ENCODE measurements at regions of chr1 and their contacts with region 1.

Region 1: DNA sequence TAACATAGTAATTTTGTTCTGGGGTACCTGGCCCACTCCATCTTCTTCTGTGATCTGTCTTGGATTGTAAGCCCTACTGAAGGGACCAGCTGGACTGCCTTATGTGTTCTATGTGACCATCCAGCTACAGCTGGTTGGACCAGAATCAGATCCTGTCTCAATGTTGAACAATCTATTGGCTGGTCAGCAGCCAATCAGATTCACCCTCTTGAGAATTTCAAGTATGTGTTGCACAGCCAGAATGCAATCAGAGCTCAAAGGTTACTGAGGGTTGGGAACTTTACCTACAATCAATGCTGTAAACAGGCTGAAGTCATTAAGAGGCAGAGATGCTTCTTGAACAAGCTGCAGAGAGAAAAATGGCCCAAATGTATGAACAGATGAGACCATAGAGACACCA is 61.9 kb downstream of the KCNC4 start:
- DNase-seq: no peak
- H3K4me3 ChIP-seq: no peak overlapping the region
- CTCF ChIP-seq: no peak

Region 2: DNA sequence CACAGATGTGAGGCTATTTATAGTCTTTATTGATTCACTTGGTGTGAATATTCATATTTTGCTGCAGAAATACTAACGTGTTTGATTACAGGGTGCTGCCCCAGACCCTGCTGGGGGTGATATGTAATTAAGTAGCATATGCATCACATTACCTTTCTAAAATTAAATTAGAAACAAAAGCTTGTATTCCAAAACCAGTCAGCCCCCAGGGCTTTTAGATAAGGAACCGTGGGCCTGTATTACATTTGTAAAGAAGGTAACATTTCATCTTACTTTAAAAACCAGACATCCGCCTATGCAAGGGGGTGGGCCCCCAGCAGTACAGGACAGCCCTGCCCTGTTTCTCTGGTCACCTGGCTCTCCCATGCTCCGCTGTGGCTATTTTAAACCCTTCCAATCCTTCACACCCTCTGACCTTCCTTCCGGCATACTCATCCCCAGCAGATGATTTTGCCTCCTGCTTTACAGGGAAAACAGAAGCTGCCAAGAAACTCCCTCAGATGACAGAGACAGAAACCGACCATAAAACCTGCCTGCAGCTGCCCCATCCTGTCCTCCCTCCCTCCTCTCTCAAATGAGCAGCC is 83.9 kb before region 1 on chr1:
- in situ Hi-C with region 1: no loop called
- DNase-seq: no peak
- H3K4me3 ChIP-seq: no peak overlapping the region
- CTCF ChIP-seq: no peak

Region 3: DNA sequence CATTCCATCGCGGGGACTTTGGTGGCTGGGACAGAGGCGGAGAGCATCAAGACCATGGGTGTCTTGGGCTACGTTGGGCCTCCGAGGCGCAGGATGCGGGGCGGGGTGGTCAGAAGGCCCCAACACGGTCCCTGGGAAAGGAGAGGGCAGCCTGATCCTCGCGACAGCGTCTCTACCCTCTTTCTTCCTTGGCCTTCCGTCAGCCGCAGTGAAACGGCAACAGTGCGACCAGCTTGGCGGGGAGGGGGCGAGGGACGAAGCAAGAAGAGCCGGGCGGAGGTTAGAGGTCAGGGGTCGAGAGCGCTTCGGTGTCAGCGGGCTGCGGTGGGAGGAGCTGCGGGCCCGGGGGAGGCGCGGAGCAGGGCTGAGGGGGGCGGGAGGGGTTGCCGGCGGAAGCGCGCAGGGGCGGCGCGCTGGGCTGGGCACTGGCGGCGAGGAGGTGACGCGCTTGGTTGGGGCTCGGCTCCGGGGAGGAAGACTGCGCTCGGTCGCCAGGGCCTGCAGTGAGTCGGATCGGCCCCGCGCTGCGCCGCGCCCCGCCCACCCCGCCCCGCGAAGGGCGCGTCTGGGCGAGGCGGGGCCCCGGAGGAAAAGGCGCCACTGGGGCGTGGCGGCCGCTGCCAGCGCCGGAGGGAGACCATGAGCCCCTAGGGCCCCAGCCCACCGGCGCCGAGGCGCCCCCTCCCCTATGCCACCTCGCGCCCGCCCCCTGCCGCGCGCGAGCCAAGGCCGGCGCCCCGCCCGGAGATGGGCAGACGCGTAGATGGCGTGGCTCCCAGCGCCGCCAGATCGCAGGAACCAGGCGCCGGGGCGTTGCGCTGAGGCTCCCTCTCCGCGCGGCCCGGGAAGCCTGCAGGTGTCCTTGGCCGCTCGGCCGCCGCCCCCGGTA is 62.1 kb before region 1 on chr1 and contains the start of gene KCNC4:
- in situ Hi-C with region 1: loop called (anchors 5 kb)
- DNase-seq: no peak
- H3K4me3 ChIP-seq: peak within 1 kb of the TSS; percentile 43
- CTCF ChIP-seq: no peak

Region 4: DNA sequence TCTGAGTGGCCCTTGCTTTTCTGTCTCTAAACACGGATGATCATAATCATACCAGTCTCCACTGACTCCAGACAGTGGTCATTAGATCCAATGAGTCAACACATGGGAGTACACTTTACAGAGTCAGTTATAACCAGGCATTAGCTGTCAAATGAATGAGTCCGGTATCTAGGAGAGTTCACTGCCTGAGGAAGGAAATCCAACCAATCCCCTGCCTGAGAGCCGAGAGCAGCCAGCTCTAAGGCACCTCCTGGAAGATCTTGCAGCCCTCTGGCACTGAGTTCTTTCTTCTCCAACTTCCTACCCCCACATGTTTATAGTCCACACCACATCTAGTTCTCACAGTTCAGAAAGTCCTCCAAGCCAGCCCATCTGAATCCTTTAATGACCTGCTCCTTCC is 37.7 kb after region 1 on chr1:
- in situ Hi-C with region 1: no loop called
- DNase-seq: no peak
- H3K4me3 ChIP-seq: no peak overlapping the region
- CTCF ChIP-seq: no peak

Region 5: GRCh38 chr1:110321846-110322245 is 49.8 kb after region 1 on chr1:
- in situ Hi-C with region 1: no loop called
- DNase-seq: no peak
- H3K4me3 ChIP-seq: no peak overlapping the region
- CTCF ChIP-seq: no peak

Measured in astrocyte of the cerebellum (primary cell).